Activated T-helper 1 cell treated with anti-CD3 and anti-CD28 coated beads, Interleukin-12 subunit alpha, Interleukin-12 subunit beta, Interleukin-2, Interleukin-4 antibody, amounts not matched to agents 30 ng/mL and 10 ng/mL and 1 ng/mL, durations not matched to agents 14 hours and 24 hours and 36 hours (primary cell): ENCODE measurements at regions of chr17 and their contacts with region 1.

Region 1: DNA sequence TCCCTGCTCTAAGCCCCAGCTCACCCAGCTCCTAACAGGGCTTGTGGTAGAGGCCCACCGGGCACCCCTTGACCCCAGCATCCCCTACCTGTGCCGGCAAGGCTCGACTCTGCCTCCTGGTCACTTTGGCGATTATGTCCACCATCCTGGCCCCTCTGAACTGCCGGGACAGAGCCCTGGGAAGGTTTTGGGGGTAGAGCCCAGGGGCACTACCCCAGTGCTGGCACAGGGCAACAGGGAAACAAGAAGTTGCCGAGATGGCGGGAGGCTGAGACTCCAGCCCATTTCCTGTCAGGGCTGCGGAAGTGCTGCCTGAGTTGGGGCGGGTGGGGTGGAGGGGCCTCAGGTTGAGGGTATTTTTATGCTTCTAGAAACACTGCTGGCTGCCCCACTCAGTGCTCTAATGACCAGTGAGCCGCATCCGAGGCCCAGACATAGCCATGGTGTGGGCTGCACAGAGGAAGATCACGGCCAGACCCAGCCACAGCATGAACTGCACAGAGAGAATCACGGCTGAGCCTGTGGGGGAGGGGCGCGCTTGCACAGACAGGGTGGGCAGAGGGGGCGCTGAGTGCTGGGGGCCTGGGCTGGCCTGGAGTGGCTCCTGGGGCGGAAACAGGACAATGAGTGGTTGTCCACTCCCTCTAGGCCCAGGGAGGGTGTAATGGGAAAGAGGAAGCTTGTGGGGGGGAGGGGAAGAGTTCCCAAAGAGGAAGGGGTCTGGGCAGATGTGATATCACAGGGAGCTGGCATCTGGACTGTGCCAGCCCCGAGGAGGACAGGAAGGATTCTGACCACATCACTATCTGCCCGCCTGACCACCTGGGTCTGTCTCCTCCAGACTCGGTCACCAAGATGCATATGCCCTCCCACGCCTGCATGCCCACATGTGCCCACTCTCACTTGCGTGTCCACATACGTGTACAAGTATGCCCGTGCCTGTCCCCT is 22.3 kb downstream of the ARHGAP27 start:
- DNase-seq: no peak
- H3K4me3 Mint-ChIP-seq: peak overlapping the region; percentile 98
- H3K27ac Mint-ChIP-seq: peak overlapping the region; percentile 97
- H3K4me1 Mint-ChIP-seq: peaks cover 48% of the 10 kb centered on the region
- H3K27me3 Mint-ChIP-seq: no peaks in the 10 kb centered on the region

Region 2: GRCh38 chr17:44940321-44940720 is 470.1 kb before region 1 on chr17:
- intact Hi-C with region 1: no loop called
- DNase-seq: no peak
- H3K4me3 Mint-ChIP-seq: no peak overlapping the region
- H3K27ac Mint-ChIP-seq: peak overlapping the region; percentile 11
- H3K4me1 Mint-ChIP-seq: peaks cover 31% of the 10 kb centered on the region
- H3K27me3 Mint-ChIP-seq: no peaks in the 10 kb centered on the region

Region 3: GRCh38 chr17:45428050-45428617 is 17.7 kb after region 1 on chr17:
- intact Hi-C with region 1: loop called (anchors 1 kb)
- DNase-seq: peak; percentile 78
- H3K4me3 Mint-ChIP-seq: peak overlapping the region; percentile 51
- H3K27ac Mint-ChIP-seq: peak overlapping the region; percentile 58
- H3K4me1 Mint-ChIP-seq: peaks cover 29% of the 10 kb centered on the region
- H3K27me3 Mint-ChIP-seq: no peaks in the 10 kb centered on the region